Endothelial cell of umbilical vein (primary cell): ENCODE measurements at regions of chr5 and their contacts with region 1.

Region 1: DNA sequence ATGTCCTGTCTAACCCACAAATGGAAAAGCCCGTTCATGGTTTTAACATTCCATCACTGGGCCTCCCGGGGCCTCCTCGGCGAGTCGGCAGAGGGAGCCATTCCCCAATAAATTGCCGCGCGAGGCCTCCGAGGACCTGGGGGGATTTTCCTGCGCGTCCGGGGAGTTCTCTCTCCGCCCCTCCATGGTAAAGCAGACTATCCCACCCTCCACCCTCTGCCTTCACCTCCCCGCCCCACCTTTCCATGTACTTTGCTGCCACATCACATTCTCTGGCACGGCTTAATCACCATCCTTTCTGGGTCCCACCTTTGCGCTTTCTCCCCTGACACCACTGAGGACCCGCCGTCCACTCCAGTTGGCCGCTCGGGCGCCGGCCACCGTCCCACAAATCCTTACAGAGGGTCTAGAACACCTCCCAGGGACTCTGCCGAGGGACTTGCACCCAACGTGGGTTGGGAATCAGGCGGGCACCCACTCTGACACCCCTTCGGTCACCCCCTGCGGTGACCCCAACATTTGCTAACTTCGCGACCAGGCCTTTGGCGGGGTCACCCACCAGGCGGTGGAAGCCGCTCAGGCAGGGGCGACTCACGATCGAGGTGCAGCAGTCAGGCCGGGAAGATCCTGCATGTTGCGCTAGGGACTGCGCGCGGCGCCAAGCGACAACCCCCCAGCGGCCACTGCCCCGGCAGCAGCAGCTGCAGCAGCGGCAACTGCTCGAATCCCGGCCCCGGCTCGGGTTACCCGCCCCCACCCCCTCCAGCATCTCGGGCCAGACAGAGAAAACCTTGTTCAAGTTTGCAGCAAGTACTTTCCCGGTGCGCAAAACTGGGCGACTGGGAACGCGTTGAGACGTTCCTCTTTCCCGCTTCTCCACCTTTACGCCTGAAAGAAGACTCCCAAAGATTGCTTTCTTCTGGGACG is at the start of gene MEGF10:
- DNase-seq: peak; percentile 33
- H3K4me3 ChIP-seq: peak within 1 kb of the TSS; percentile 8 to 46 (median 28)
- H3K27ac ChIP-seq: no peak within 1 kb of the TSS
- H3K4me1 ChIP-seq: peaks cover 17% of the 10 kb centered on the region
- H3K27me3 ChIP-seq: peaks cover 26 to 47% of the 10 kb centered on the region in 2 experiments
- CTCF ChIP-seq: peak; percentile 66 to 71
- POLR2A ChIP-seq: no peak
- total RNA-seq, gene MEGF10: 0.21 and 1.00 TPM in 2 replicates

Region 2: DNA sequence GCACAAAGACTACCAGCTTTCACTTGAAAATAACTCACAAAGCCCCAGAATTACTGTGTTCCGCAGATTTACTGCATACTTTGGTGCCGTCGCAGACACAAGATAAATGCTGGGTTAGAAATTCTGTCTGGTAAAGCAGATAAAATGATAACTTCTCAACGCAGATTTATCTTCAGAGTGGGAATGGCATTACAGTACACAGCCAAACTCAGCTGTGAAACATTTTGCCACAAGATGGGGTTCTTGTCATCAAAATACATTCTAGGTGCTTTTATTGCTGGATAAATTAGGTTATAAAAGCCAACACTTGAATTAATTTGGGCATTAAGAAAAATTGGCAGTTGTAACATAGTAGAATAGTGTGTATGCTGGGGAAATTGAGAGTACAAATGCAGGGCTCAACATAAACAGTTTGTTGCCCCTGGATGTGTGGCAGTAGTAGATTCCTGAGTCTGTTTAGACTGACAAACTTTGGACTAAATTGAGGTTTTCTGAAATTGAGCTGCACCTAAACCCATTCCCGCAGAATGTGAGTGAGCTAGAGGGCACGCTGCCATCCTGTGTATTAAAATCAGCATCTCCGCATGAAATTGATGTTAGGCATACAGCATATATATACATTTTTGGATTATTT is 452.3 kb before region 1 on chr5:
- CTCF ChIA-PET with region 1: no interaction called
- POLR2A ChIA-PET with region 1: no interaction called
- dilution Hi-C with region 1: no loop called
- intact Hi-C with region 1: loop called (anchors 1 kb)
- DNase-seq: peak; percentile 54
- H3K4me3 ChIP-seq: no peak overlapping the region
- H3K27ac ChIP-seq: no peak overlapping the region
- H3K4me1 ChIP-seq: no peaks in the 10 kb centered on the region
- H3K27me3 ChIP-seq: no peaks in the 10 kb centered on the region
- CTCF ChIP-seq: peak; percentile 8 to 34
- POLR2A ChIP-seq: no peak